ENCODE measurements at regions of chr2 and their contacts with region 1.

Region 1: DNA sequence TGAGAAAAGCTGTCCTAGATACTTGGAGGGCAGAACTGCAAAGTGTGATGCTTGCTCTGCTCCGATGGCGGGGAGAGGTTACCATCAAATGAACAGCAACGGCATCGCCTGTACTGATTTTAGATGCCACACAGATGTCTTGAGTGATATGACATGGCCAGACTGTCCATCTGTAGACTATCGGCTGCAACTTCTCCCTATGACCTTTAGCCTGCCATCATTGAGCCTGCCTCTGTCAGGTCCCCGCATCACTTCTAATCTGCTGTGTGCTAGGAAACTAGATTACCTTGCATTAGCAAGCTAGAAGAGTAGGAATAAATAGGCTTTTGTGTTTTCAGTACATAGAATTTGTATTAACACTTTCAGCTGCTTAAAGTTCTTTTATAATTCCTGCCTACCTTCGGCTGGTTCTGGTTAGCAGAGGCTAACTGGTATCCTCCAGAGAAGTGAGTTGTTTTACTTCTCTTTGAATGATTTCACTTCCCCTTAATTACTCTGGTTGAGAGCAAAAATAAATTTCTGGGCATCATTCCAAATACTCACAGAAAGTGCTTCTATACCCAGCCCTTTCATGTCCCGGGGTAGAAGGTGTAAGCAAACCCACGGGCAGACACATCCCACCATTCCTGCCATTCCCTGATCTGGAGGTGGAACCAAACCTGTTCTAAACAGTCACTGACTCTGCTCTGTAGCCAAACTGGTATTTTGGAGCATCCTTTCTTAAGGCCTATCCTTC is 24.0 kb downstream of the GAREM2 start:
- DNase-seq: no peak
- H3K4me3 ChIP-seq: no peak overlapping the region
- H3K27ac ChIP-seq: no peak overlapping the region
- H3K4me1 ChIP-seq: no peaks in the 10 kb centered on the region
- H3K27me3 ChIP-seq: no peaks in the 10 kb centered on the region
- CTCF ChIP-seq: no peak

Region 2: DNA sequence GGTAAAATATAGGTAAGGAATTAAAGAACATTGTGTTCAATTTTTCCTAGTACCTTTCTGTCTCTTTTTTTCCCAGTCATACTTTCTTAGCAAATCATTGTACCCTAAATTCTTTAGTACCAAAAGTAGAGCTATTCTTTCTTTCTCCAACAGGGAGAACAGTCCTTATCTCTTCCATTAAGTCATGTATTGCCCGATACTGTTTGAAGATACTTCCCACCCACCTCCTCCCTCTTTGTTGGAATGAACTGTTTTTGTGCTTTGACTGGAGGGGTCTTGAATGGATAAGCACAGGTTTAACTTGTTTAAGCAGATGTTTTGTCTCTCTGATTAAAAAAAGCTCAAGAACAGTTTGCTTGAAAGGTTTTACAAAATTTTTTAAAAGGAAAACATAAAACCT is 121.7 kb before region 1 on chr2:
- CTCF ChIA-PET with region 1: no interaction called
- POLR2A ChIA-PET with region 1: interaction called, 19 read pairs
- intact Hi-C with region 1: no loop called
- DNase-seq: no peak
- H3K4me3 ChIP-seq: no peak overlapping the region
- H3K27ac ChIP-seq: no peak overlapping the region
- H3K4me1 ChIP-seq: peaks cover 17% of the 10 kb centered on the region
- H3K27me3 ChIP-seq: no peaks in the 10 kb centered on the region
- CTCF ChIP-seq: no peak

Region 3: GRCh38 chr2:26438526-26438925 is 241.7 kb after region 1 on chr2:
- CTCF ChIA-PET with region 1: no interaction called
- POLR2A ChIA-PET with region 1: no interaction called
- intact Hi-C with region 1: no loop called
- DNase-seq: no peak
- H3K4me3 ChIP-seq: no peak overlapping the region
- H3K27ac ChIP-seq: no peak overlapping the region
- H3K4me1 ChIP-seq: no peaks in the 10 kb centered on the region
- H3K27me3 ChIP-seq: no peaks in the 10 kb centered on the region
- CTCF ChIP-seq: no peak

Region 4: GRCh38 chr2:26670171-26670570 is 473.3 kb after region 1 on chr2:
- CTCF ChIA-PET with region 1: no interaction called
- POLR2A ChIA-PET with region 1: no interaction called
- intact Hi-C with region 1: no loop called
- DNase-seq: peak; percentile 40
- H3K4me3 ChIP-seq: no peak overlapping the region
- H3K27ac ChIP-seq: no peak overlapping the region
- H3K4me1 ChIP-seq: peaks cover 3% of the 10 kb centered on the region
- H3K27me3 ChIP-seq: no peaks in the 10 kb centered on the region
- CTCF ChIP-seq: no peak

Region 5: GRCh38 chr2:26692279-26692896 is 495.5 kb after region 1 on chr2 and contains the start of gene KCNK3:
- CTCF ChIA-PET with region 1: no interaction called
- POLR2A ChIA-PET with region 1: no interaction called
- intact Hi-C with region 1: no loop called
- DNase-seq: peak; percentile 69
- H3K4me3 ChIP-seq: peak within 1 kb of the TSS; percentile 25
- H3K27ac ChIP-seq: no peak within 1 kb of the TSS
- H3K4me1 ChIP-seq: no peaks in the 10 kb centered on the region
- H3K27me3 ChIP-seq: peaks cover 52% of the 10 kb centered on the region
- CTCF ChIP-seq: no peak
- total RNA-seq, gene KCNK3: 0.13 and 0.31 TPM in 2 replicates